ENCODE measurements at regions of chr3 and their contacts with region 1.

Region 1: DNA sequence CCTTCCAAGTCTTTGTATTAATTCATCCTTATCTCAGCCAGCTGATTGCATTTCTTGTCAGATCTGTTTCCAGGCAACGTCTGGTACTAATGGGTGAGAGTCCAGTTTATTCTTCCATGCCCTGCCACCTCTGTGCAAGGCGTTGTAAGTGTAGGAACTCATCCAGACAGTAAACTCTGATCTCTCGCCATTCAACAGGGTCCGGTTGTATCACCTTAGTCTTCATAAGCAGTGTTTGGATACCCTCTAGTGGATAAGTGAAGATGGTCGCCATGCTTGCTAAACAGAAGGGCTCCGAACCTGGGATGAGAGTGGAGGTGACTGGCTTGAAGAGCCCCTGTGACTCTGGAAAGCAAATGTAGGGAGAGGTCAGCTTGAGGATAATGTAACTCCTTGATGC is 51.6 kb upstream of the CMTM7 start:
- H3K4me3 Mint-ChIP-seq: no peak overlapping the region
- H3K27ac Mint-ChIP-seq: no peak overlapping the region
- H3K4me1 Mint-ChIP-seq: no peaks in the 10 kb centered on the region
- H3K27me3 Mint-ChIP-seq: no peaks in the 10 kb centered on the region

Region 2: DNA sequence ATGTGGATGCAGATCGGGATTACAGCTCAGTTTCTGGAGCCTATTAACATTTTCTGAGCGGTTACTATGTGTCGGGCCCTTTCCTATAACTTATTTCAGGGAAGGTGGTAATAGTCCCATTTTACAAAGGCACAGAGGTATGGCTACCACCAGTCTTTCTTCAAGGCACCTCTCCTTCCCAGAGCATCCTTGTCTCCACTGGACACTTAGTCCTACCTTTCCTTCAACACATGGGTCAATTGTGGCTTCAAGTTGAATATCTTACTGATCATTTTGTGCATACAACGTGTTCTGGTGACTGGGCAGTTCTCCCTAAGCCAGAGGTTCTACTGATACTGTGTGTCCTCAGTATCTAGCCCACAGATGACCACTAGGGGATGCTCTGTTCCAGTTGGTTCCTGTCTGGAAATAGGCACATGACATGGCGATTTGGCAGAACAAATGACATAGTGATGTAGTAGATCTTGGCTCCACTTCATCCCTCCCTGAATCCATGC is 162.3 kb before region 1 on chr3:
- intact Hi-C with region 1: loop called (anchors 5 kb)
- H3K4me3 Mint-ChIP-seq: no peak overlapping the region
- H3K27ac Mint-ChIP-seq: no peak overlapping the region
- H3K4me1 Mint-ChIP-seq: peaks cover 19% of the 10 kb centered on the region
- H3K27me3 Mint-ChIP-seq: peaks cover 13% of the 10 kb centered on the region

Measured in dendritic cell treated with granulocyte-macrophage colony-stimulating factor and Interleukin-4, amounts not matched to agents 40 ng/mL and 50 ng/mL, for 4 days (primary cell).